Left lung (tissue), 14 donors: ENCODE measurements at regions of chr2 and their contacts with region 1.

Region 1: GRCh38 chr2:99180755-99181623 is at the starts of genes MITD1 and MRPL30:
- DNase-seq: peak; percentile 93 to 96 (median 94)
- ATAC-seq: peak; percentile 97
- H3K4me3 ChIP-seq: peak within 1 kb of the TSS; percentile 79 to 87
- H3K27ac ChIP-seq: peak within 1 kb of the TSS; percentile 78 to 88
- H3K4me1 ChIP-seq: peaks cover 23 to 51% of the 10 kb centered on the region in 2 donors
- H3K27me3 ChIP-seq: no peaks in the 10 kb centered on the region
- CTCF ChIP-seq: no peak
- polyA plus RNA-seq, gene MITD1: 39.8 to 62.7 (median 49.8) TPM
- polyA plus RNA-seq, gene MRPL30: 46.9 to 58.8 (median 52.6) TPM

Region 2: DNA sequence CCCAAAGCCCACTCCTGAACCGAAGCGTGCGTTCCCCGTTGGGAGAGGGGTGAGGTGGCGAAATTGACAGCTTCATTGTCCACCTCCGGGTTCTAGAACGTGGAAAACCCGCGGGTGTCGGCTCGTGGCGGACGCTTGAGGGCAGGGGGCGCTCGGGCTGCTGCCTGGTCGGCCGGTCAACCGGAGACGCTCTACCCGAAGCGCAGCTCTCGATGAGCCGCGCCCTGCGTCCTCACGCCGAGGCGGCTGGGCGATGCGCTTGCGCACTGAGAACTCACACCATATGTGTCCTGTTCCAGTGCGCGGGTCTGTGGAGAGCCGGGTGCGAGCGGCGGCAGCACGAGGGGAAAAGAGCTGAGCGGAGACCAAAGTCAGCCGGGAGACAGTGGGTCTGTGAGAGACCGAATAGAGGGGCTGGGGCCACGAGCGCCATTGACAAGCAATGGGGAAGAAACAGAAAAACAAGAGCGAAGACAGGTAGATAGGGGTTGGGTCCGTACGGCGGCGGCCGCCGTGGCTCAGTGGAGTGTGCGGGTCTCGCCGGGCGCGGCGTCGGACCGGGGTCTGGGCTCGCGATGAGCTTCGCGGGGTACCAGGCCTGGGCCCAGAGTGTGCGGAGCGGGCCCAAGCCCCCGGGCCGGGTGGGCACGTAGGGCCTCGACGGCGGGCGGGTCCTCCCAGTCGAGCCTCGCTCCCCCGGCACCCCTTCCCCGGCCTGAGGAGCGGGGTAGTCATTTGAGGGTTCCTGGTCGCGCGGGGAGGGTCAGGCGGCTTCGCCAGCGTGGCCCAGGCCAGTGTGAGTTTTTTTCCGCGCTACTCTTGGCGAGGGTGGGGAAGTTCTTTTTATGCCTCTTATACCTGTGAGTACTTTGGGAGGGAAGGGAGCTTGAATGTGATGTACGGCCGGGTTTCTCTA is 156.4 kb after region 1 on chr2 and contains the start of gene EIF5B:
- intact Hi-C with region 1: loop called in 1 of 2 experiments (anchors 10 kb)
- DNase-seq: peak; percentile 94 to 100 (median 98)
- ATAC-seq: peak; percentile 92
- H3K4me3 ChIP-seq: peak within 1 kb of the TSS; percentile 66 to 97
- H3K27ac ChIP-seq: peak within 1 kb of the TSS; percentile 88 to 95
- H3K4me1 ChIP-seq: peaks cover 16 to 47% of the 10 kb centered on the region in 2 donors
- H3K27me3 ChIP-seq: no peaks in the 10 kb centered on the region
- CTCF ChIP-seq: peak; percentile 54 to 55
- polyA plus RNA-seq, gene EIF5B: 54.2 to 66.0 (median 62.9) TPM